Left colon (tissue), 2 donors: ENCODE measurements at regions of chr1 and their contacts with region 1.

Region 1: GRCh38 chr1:28409090-28409489 is 39.5 kb downstream of the PHACTR4 start:
- DNase-seq: no peak
- ATAC-seq: no peak

Region 2: GRCh38 chr1:28470146-28470545 is 61.1 kb after region 1 on chr1:
- intact Hi-C with region 1: loop called in 1 of 2 experiments (anchors 10 kb)
- DNase-seq: no peak
- ATAC-seq: no peak